BJ (cell line): ENCODE measurements at regions of chr15 and their contacts with region 1.

Region 1: DNA sequence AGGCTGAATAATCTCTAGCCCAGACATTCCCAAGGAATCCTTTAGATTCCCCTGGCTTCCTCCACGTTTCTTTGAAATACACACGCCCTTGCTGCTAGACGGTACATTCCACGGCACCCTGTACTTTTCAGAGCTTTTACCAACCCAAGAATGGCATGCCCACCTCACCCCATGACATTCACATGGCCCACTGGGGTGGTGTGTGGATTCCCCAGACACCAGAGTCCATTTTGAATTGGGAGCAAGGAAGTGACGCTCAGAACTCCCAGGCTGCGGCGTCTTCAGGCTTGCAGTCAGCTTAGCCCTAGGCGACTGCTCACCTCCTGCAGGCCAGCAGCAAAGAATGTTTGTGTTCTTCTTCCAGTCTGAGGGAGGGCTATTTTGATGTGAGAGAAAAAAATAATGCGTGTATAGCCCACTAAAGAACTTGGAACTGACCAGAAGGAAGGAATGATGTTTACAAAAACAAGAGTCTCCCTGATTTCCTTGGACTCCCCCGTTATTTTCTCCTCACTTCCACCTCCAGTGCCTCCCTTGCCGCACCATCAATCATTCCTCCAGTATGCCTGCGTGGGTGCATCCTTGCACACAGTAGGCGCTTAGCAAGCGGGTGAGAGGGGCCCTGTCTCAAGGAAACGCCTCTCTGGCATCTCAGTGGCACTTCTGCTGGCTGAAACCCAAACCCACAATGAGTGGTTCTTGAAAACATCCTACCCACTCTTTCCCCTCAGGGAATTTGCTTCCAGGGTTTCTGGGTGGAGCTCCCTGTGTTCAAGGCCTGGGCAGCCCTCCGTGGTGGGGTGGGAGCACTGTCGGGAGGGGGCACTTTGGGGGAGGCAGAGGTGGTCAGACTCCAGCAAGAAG is 59.9 kb downstream of the SMAD6 start:
- DNase-seq: no peak
- H3K4me3 ChIP-seq: no peak overlapping the region
- H3K27me3 ChIP-seq: no peaks in the 10 kb centered on the region
- CTCF ChIP-seq: no peak

Region 2: GRCh38 chr15:66774001-66774814 is 12.2 kb after region 1 on chr15:
- CTCF ChIA-PET with region 1: interaction called, 14 read pairs
- POLR2A ChIA-PET with region 1: no interaction called
- DNase-seq: no peak
- H3K4me3 ChIP-seq: no peak overlapping the region
- H3K27me3 ChIP-seq: no peaks in the 10 kb centered on the region
- CTCF ChIP-seq: peak; percentile 95